Breast epithelium (tissue), 4 donors: ENCODE measurements at regions of chr12 and their contacts with region 1.

Region 1: GRCh38 chr12:63397807-63398206 is 246.8 kb upstream of the AVPR1A start:
- DNase-seq: no peak
- H3K4me3 ChIP-seq: no peak overlapping the region
- H3K27ac ChIP-seq: no peak overlapping the region
- H3K4me1 ChIP-seq: no peaks in the 10 kb centered on the region
- H3K27me3 ChIP-seq: no peaks in the 10 kb centered on the region
- CTCF ChIP-seq: no peak
- POLR2A ChIP-seq: no peak

Region 2: DNA sequence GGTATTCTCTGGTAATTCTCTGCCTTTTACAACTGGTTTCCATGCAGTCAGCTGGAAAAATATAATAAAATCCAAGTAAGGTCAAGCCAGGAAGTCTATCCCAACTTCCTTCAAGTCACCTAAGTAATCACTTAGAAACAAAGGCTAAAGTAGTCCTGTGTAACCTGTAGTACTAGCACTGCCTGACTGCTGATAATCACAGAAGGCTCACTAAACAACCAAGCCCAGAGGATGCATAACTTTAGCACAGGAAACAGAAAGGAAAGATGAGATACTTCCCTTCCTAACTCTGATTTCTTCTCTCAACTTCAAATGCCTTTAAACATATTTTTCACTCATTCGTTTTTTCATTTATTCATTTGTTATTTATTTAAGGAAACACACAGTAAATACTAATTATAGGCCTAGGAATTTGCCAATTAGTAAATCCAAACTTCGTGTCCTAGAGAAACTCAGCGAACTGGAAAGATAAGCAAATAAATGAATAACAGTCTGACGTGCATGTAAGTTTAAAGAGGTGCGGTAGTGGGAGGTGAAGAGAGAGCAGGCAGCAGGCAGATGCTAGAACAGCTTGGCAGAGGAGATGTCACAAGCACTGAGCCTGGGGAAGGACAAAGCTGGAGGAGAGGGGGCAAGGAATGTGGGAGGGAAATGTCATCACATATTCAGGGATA is 42.1 kb after region 1 on chr12:
- intact Hi-C with region 1: loop called (anchors 2 kb)
- DNase-seq: no peak
- H3K4me3 ChIP-seq: no peak overlapping the region
- H3K27ac ChIP-seq: no peak overlapping the region
- H3K4me1 ChIP-seq: no peaks in the 10 kb centered on the region
- H3K27me3 ChIP-seq: no peaks in the 10 kb centered on the region
- CTCF ChIP-seq: no peak
- POLR2A ChIP-seq: no peak

Region 3: GRCh38 chr12:63930971-63931370 is 533.2 kb after region 1 on chr12:
- intact Hi-C with region 1: no loop called
- DNase-seq: no peak
- H3K4me3 ChIP-seq: no peak overlapping the region
- H3K27ac ChIP-seq: no peak overlapping the region
- H3K4me1 ChIP-seq: no peaks in the 10 kb centered on the region
- H3K27me3 ChIP-seq: no peaks in the 10 kb centered on the region
- CTCF ChIP-seq: no peak
- POLR2A ChIP-seq: no peak

Region 4: DNA sequence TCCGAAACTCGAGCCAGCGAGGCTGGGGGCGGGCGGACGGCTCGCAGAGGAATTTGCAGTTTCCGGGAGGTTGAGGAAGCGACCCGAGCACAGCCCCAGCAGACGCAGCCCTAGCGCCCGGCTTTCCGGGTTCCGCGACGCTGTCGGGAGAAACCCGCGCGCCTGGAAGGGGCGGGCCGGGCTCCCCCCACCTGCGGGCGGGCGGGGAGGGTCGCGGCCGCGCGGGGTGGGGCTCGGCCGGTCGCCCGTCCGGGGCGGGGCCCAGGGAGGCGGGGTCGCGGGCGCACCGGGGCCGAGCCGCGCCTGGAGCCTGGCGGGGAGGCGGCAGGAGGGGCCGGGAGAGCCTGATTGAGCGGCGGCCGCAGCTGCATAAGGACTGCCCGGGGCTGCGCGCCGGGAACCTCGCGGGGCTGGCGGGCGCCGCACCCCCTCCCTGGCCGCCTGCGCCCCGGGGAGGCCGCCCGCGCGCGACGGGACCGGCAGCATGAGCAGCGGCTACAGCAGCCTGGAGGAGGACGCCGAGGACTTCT is 1212.4 kb after region 1 on chr12 and contains the start of gene RASSF3:
- intact Hi-C with region 1: no loop called
- DNase-seq: peak in 1 of 2 donors; percentile 47
- H3K4me3 ChIP-seq: peak within 1 kb of the TSS; percentile 90 to 97 (median 91)
- H3K27ac ChIP-seq: peak within 1 kb of the TSS; percentile 89 to 94
- H3K4me1 ChIP-seq: no peaks in the 10 kb centered on the region
- H3K27me3 ChIP-seq: no peaks in the 10 kb centered on the region
- CTCF ChIP-seq: no peak
- POLR2A ChIP-seq: no peak
- total RNA-seq, gene RASSF3: 23.4 to 28.4 (median 24.6) TPM